Right ventricle myocardium superior (tissue), 1 donor: ENCODE measurements at regions of chr3 and their contacts with region 1.

Region 1: DNA sequence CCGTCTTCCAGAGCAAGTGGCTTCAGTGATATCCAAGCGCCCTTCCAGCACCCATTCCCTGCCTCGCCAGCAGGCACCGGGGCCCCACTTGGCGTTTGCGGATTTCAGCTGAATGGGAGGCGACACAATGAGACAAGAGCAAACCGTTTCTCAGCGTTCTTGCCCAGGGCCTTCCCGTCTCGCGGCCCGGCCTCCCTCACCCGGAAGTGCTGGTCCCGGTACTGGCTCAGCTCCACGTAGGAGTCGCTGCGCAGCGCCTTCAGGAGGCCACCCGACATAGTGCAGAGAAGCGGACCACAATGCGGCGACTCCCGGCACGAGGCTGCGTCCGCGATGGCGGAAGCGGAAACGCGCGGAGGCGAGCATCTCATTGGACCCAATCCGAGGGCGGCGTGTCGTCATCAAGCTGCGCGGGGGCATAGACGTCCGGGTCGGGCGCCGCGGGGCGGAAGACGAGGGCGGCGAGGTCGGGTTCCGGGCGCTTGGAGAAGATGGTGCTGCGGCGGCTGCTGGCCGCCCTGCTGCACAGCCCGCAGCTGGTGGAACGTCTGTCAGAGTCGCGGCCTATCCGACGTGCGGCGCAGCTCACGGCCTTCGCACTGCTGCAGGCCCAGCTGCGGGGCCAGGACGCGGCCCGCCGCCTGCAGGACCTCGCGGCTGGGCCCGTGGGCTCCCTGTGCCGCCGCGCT is at the start of gene NCBP2:
- DNase-seq: peak; percentile 100
- ATAC-seq: peak; percentile 98
- total RNA-seq, gene NCBP2: 29.4 TPM

Region 2: DNA sequence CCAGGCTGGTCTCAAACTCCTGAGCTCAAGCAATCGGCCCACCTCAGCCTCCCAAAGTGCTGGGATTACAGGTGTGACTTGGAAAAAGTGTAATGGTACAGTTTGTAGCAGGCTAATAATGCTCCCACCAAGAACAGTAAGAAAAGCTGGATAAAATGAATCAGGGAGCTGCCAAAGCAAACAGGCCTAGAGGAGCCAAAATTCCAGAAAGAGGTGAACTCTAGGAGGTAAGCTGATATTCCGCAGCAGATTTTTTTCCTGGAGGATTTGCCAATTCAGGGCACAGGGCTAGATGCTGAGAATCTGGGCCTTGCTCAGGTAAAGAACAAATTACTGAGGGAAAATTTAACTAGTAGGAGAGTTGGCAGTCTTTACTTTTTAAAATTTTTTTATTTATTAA is 643.8 kb before region 1 on chr3:
- intact Hi-C with region 1: no loop called
- DNase-seq: no peak
- ATAC-seq: no peak

Region 3: GRCh38 chr3:196867507-196868296 is 74.7 kb before region 1 on chr3 and contains the start of gene SENP5:
- intact Hi-C with region 1: loop called (anchors 10 kb)
- DNase-seq: peak; percentile 95
- ATAC-seq: peak; percentile 100
- total RNA-seq, gene SENP5: 18.0 TPM

Region 4: DNA sequence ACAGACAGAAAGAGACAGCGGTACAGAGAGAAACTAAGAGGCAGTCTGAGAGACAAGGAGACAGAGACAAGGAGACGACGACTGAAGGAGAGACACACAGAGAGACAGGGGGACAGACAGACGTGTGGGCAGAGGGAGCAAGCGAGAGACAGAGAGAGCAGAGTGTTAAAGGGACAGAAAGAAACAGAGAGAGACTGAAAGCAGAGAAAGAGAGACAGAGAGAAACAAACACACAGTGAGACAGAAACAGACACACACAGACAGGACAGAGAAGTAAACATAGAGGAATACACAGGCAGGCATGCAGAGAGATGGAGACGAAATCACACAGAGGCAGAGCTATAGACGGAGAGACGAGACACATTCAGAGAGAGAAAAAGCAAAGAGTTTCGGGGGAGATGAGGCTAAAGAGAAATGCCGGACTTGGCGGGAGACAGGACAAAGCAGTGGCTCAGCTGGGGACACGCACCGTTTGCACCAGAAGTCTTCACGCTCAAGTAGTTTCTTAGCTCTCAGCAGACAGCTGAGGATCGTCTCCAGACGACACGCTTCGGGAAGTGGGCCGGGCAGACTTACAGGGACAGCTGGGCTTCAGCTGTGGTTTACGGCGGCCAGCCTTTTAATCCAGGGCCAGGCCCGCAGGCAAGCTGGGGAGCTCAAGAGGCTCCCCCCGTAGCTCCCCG is 412.1 kb after region 1 on chr3:
- intact Hi-C with region 1: no loop called
- DNase-seq: peak; percentile 75
- ATAC-seq: peak; percentile 12